Pancreas (tissue), 10 donors: ENCODE measurements at regions of chr11 and their contacts with region 1.

Region 1: DNA sequence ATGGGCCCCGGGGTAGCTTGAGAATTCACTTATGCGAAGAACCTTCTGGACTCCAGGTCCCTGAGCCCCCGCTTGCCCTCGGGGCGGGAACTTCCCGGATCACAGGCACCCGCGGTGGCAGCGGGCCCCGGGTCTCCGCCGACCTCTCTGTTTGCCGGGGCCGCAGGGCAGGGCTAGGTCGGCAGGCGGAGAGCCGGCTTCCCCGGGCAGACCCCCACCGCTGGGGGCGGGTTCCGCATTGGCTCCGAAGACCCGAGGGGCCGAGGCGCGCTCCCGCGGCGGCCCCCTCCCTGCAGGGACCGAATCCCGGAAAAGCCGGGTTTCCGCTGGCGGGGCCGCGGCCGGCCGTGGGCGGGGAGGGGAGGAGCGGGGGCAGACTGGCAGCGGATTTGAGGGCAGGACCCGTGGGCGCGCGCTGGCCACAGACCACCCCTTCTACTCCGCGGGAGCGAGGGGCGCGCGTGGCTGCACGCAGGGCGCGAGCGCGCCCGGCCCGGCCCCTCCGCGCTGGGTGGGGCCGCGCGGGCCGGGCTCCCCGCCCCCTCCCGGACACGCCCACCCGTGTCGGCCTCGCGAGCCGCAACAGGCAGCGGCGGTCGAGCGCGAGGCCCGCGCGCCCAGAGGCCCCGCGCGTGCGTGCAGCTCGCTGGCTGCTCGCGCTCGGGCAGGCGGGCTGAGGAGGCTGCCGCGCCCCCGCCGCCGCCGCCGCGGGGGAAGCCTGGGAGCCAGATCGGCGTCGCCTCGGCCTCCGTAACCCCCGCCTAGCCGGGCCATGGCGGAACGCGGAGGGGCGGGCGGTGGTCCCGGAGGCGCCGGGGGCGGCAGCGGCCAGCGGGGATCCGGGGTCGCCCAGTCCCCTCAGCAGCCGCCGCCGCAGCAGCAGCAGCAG is at the start of gene PACS1:
- DNase-seq: peak; percentile 67 to 88 (median 78)
- ATAC-seq: peak; percentile 50 to 77 (median 54)
- H3K4me3 ChIP-seq: peak within 1 kb of the TSS; percentile 73 to 90 (median 78)
- H3K27ac ChIP-seq: peak within 1 kb of the TSS; percentile 75 to 94 (median 88)
- H3K4me1 ChIP-seq: peaks cover 0 to 17% (median 11%) of the 10 kb centered on the region in 3 donors
- H3K27me3 ChIP-seq: no peaks in the 10 kb centered on the region
- CTCF ChIP-seq: no peak
- total RNA-seq, gene PACS1: 19.6 to 61.0 (median 28.8) TPM

Region 2: DNA sequence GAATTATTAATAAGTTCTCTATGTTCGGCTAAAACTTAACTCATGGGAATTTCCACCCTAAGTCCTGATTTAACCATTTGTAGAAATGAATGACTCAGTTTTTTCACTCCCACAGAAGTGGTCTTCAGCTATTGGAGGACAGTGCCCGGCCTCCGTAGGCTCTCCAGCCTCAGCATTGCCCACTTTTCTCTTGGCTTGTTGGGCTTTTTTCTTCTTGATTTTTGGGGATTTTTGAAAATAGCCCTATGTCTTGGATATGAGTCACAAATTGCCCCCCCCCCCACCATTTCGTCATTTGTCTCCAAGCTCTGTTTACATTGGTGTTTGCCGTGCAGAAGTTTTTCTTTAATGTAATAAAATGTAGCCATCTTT is 66.8 kb after region 1 on chr11:
- intact Hi-C with region 1: loop called in 2 of 3 experiments (anchors 10 kb)
- DNase-seq: no peak
- ATAC-seq: peak in 2 of 4 donors; percentile 21 to 28
- H3K4me3 ChIP-seq: no peak overlapping the region
- H3K27ac ChIP-seq: peak overlapping the region in 2 of 4 donors; percentile 47 to 52
- H3K4me1 ChIP-seq: peaks cover 0 to 21% (median 2%) of the 10 kb centered on the region in 3 donors
- H3K27me3 ChIP-seq: no peaks in the 10 kb centered on the region
- CTCF ChIP-seq: no peak